ENCODE measurements at regions of chr5 and their contacts with region 1.

Region 1: GRCh38 chr5:61280205-61280604 is 51.9 kb upstream of the ZSWIM6 start:
- DNase-seq: peak; percentile 44
- H3K4me3 Mint-ChIP-seq: no peak overlapping the region
- H3K27ac Mint-ChIP-seq: no peak overlapping the region
- H3K4me1 Mint-ChIP-seq: peaks cover 31% of the 10 kb centered on the region
- H3K27me3 Mint-ChIP-seq: no peaks in the 10 kb centered on the region

Region 2: DNA sequence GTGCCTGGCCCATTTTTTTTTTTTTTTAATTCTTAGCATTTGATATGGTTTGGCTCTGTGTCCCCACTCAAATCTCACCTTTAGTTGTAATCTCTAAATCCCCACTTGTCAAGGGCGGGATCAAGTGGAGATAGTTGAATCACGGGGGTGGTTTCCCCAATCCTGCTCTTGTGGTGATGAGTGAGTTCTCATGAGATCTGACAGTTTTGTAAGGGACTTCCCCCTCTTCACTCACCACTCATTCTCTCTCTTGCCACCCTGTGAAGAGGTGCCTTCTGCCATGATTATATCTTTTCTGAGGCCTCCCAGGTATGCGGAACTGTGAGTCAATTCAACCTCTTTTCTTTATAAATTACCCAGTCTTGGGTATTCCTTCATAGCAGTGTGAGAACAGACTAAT is 308.0 kb before region 1 on chr5:
- CTCF ChIA-PET with region 1: no interaction called
- intact Hi-C with region 1: loop called (anchors 5 kb)
- DNase-seq: peak; percentile 78
- H3K4me3 Mint-ChIP-seq: no peak overlapping the region
- H3K27ac Mint-ChIP-seq: peak overlapping the region; percentile 11
- H3K4me1 Mint-ChIP-seq: peaks cover 26% of the 10 kb centered on the region
- H3K27me3 Mint-ChIP-seq: no peaks in the 10 kb centered on the region

Region 3: GRCh38 chr5:61162010-61162831 is 118.0 kb before region 1 on chr5 and contains the start of gene SMIM15:
- CTCF ChIA-PET with region 1: no interaction called
- intact Hi-C with region 1: loop called (anchors 1 kb)
- DNase-seq: peak; percentile 90
- H3K4me3 Mint-ChIP-seq: peak within 1 kb of the TSS; percentile 97
- H3K27ac Mint-ChIP-seq: peak within 1 kb of the TSS; percentile 95
- H3K4me1 Mint-ChIP-seq: peaks cover 38% of the 10 kb centered on the region
- H3K27me3 Mint-ChIP-seq: no peaks in the 10 kb centered on the region
- total RNA-seq, gene SMIM15: 45.8 to 48.1 TPM

Region 4: DNA sequence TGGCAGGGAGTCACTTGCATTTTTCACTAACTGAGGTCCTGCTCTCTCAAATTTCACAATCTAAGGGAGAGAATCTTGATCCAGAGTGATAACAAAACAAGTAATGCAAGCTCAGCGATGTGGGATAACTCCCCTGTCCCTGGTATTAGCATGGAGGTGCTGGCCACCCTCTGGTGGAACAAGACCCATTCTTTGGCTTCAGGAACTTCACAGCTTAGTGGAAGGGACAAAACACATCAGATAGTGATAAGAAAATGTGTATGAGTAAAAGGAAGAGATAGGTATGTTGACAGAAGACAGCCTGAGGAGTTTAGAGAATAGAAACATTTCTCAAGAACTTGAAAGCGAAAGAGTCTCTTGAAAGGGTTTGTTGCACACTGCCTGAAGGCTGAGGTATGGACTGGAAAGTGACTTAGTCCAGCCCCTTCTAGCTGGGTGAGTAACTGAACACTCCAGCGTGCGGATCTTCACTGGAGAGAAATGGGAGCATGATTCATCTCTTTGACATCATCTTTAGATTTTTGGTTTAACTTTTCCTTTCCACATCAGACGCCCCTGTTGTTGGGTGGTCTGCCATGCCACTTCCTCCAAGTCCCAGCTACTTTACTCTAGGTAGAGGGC is 26.4 kb after region 1 on chr5:
- CTCF ChIA-PET with region 1: no interaction called
- intact Hi-C with region 1: loop called (anchors 1 kb)
- DNase-seq: peak; percentile 45
- H3K4me3 Mint-ChIP-seq: no peak overlapping the region
- H3K27ac Mint-ChIP-seq: peak overlapping the region; percentile 55
- H3K4me1 Mint-ChIP-seq: peaks cover 9% of the 10 kb centered on the region
- H3K27me3 Mint-ChIP-seq: peaks cover 5% of the 10 kb centered on the region

Region 5: GRCh38 chr5:61625681-61626621 is 345.7 kb after region 1 on chr5:
- CTCF ChIA-PET with region 1: no interaction called
- intact Hi-C with region 1: loop called (anchors 10 kb)
- DNase-seq: peak; percentile 60
- H3K4me3 Mint-ChIP-seq: peak overlapping the region; percentile 59
- H3K27ac Mint-ChIP-seq: no peak overlapping the region
- H3K4me1 Mint-ChIP-seq: no peaks in the 10 kb centered on the region
- H3K27me3 Mint-ChIP-seq: peaks cover 40% of the 10 kb centered on the region